ENCODE measurements at regions of chr5 and their contacts with region 1.

Region 1: GRCh38 chr5:16552666-16553343 is 64.0 kb downstream of the RETREG1 start:
- DNase-seq: peak; percentile 44
- CTCF ChIP-seq: peak; percentile 74

Region 2: DNA sequence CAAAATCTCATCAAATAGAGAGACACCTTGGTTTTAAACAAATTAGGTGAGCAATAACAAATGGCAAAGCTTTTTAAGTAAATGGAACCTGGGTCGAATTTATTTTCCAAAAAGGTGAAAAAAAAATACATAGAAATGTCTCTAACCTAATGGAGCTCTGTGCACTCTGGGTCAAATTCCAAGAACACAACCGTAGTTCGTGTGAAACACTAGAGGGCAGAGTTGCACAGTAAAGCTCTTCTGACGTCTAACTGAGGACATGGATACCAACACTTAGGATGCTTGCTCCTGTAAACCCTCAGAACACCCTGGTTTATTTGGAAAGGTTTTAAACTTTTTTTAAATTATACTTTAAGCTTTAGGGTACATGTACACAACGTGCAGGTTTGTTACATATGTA is 392.1 kb before region 1 on chr5:
- CTCF ChIA-PET with region 1: interaction called, 56 read pairs
- POLR2A ChIA-PET with region 1: no interaction called
- DNase-seq: peak; percentile 26
- CTCF ChIP-seq: peak; percentile 74

Region 3: DNA sequence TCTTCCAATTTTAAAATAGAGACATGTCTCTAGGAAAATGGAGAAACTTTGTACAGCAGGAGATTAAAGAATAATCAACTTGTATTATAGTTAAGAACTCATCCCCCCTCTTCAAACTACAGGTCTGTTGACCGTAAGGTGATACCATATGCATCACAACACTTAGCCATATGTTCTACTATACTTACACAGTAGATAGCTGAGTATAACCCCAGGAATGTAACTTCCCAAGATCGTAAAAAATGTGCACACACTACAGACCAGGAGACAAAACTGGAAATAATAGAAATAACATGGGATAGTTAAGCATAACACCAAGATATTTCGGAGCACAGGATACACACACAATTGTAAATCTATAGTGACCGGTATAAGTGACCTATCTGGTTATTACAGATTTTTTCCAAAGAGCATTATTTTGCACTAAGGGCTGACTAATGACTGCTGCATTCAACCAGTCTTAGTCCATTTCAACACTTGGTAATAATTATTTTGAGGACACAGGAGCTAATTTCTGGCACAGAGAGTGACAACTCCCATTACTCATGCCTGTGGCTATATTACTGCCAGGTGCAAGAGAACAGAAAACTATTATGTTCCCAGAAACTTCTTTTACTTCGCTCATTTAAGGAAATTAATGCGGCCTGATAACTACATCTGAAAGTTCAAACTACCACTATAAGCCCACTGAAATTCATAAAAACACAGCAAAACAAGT is 71.8 kb before region 1 on chr5:
- CTCF ChIA-PET with region 1: interaction called, 16 read pairs
- POLR2A ChIA-PET with region 1: no interaction called
- DNase-seq: no peak
- CTCF ChIP-seq: no peak

Region 4: DNA sequence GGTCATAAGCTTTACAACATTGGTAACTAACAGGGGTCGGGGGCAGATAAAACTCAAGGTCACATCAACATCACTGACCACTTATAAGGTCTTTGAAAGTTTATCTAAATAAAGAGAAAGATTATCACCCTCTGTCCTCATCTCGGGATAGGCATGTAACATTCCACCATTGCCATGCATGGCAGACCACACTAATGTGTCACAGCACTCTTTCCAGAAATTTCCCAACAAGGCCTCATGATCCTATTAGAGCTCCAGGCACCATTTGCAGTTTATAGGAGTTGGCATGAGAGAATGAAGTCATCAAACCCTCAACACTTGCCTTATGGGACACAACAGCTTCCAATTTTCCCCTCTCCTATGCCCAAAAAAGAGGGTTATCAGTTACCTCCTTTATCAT is 55.3 kb before region 1 on chr5:
- CTCF ChIA-PET with region 1: interaction called, 16 read pairs
- POLR2A ChIA-PET with region 1: no interaction called
- DNase-seq: no peak
- CTCF ChIP-seq: no peak

Region 5: DNA sequence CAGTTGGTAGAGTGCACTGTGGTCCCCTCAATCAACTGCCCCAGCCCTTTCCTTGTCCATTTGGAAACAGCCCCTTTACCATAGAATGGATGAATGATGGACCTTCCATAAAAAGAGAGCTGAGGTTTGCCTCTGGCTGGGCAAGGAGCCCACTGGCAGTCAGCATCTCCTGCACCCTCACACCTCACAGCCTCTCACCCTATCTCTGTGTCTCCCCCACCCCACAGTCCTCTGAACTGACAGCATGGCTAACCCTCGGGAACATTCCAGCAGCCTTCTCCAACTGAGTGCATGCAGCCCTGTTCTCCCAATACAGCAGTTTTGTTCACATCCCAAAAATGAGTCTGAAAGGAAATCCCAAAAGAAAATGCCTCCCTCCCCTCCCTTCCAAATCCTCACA is 12.3 kb after region 1 on chr5:
- CTCF ChIA-PET with region 1: interaction called, 25 read pairs
- POLR2A ChIA-PET with region 1: no interaction called
- DNase-seq: no peak
- CTCF ChIP-seq: no peak

Region 6: DNA sequence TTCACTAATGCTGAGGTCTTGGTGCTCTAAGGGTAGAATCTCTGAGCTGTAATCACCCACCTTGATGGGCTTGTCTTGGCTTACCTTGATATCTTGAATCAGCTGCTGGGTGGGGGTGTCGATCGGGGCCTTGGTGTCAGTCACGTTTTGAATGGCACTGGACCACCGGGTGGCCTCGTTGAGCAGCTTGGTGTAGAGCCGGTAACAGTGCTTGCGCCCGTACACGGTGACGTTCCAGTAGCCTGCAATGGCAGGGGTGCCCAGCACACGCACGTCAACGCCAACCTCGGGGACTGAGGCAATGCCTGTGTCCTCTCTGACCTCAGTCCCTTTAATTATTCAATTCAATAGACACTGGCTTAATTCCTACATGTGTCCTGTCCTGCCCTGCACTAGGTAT is 127.1 kb after region 1 on chr5:
- CTCF ChIA-PET with region 1: no interaction called
- POLR2A ChIA-PET with region 1: no interaction called
- DNase-seq: no peak
- CTCF ChIP-seq: no peak

Region 7: GRCh38 chr5:16701134-16702099 is 148.6 kb after region 1 on chr5:
- CTCF ChIA-PET with region 1: no interaction called
- POLR2A ChIA-PET with region 1: no interaction called
- DNase-seq: no peak
- CTCF ChIP-seq: no peak

Measured in GM10248 (cell line).